SK-N-SH (cell line): ENCODE measurements at regions of chr17 and their contacts with region 1.

Region 1: GRCh38 chr17:58577642-58578091 is 63.2 kb upstream of the MTMR4 start:
- DNase-seq: peak; percentile 56
- H3K4me3 ChIP-seq: no peak overlapping the region; a peak in 1 of 4 replicates
- H3K27ac ChIP-seq: no peak overlapping the region
- H3K4me1 ChIP-seq: no peaks in the 10 kb centered on the region
- H3K27me3 ChIP-seq: 0 out of 2 replicates have a peak, but pooled peaks cover 4% of the 10 kb centered on the region
- CTCF ChIP-seq: peak; percentile 83
- EP300 ChIP-seq: no peak
- RAD21 ChIP-seq: peak; percentile 59

Region 2: DNA sequence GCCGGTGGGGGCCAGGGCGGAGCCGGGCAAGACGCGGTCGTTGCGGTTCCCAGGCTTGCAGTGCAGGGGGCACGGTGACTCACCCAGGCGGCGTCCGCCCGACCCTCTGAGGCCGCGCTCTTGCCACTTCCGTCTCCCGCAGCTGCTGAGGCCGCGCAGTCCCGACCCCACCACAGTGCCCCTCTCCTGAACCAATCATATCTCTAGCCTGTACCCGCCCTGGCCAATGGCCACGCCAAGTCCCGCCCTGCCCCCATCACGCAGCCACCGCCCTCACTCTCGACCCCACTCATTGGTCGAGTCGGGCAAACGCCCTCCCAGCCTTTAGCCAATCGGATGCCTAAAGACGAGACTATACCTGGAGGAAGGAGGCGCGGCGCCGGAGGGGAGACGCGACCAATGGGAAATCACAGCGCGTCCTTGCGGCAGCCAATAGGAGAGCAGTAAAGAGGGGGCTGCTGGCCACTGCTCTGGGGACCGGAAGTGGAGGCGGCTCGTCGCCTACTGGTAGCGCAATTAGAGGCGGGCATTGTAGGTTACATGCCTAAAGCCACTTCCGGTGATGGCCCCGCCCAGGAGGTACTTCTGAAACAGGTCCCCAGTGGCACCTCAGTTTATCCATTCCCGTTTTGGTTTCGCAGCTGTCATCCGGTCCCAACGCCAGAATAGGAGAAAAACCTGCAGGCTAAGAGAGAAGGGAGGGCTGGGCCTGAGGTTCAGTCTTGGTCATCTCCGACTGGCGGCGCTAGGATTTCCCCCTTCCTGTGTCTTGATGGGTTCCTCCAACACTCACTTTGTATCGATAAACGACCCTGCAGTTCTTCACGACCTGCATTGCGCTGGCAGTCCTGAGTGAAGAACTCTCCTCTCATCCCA is 59.7 kb before region 1 on chr17:
- CTCF ChIA-PET with region 1: interaction called, 21 read pairs
- POLR2A ChIA-PET with region 1: no interaction called
- DNase-seq: peak; percentile 96
- H3K4me3 ChIP-seq: peak overlapping the region; percentile 87 to 95
- H3K27ac ChIP-seq: peak overlapping the region; percentile 92 to 97
- H3K4me1 ChIP-seq: peaks cover 5 to 25% of the 10 kb centered on the region in 2 experiments; a peak in 2 of 4 replicates
- H3K27me3 ChIP-seq: no peaks in the 10 kb centered on the region
- CTCF ChIP-seq: no peak
- EP300 ChIP-seq: peak; percentile 18 to 30; a peak in 2 of 4 replicates
- RAD21 ChIP-seq: no peak

Region 3: GRCh38 chr17:58541249-58541648 is 36.4 kb before region 1 on chr17:
- CTCF ChIA-PET with region 1: interaction called, 27 read pairs
- POLR2A ChIA-PET with region 1: no interaction called
- DNase-seq: no peak
- H3K4me3 ChIP-seq: no peak overlapping the region
- H3K27ac ChIP-seq: no peak overlapping the region
- H3K4me1 ChIP-seq: no peaks in the 10 kb centered on the region
- H3K27me3 ChIP-seq: peaks cover 30% of the 10 kb centered on the region
- CTCF ChIP-seq: peak; percentile 35
- EP300 ChIP-seq: no peak
- RAD21 ChIP-seq: no peak

Region 4: GRCh38 chr17:58565780-58566189 is 11.9 kb before region 1 on chr17:
- CTCF ChIA-PET with region 1: interaction called, 26 read pairs
- POLR2A ChIA-PET with region 1: no interaction called
- DNase-seq: no peak
- H3K4me3 ChIP-seq: no peak overlapping the region
- H3K27ac ChIP-seq: no peak overlapping the region
- H3K4me1 ChIP-seq: no peaks in the 10 kb centered on the region
- H3K27me3 ChIP-seq: no peaks in the 10 kb centered on the region; the same call in 1 of the 2 replicates
- CTCF ChIP-seq: no peak
- EP300 ChIP-seq: no peak
- RAD21 ChIP-seq: no peak

Region 5: DNA sequence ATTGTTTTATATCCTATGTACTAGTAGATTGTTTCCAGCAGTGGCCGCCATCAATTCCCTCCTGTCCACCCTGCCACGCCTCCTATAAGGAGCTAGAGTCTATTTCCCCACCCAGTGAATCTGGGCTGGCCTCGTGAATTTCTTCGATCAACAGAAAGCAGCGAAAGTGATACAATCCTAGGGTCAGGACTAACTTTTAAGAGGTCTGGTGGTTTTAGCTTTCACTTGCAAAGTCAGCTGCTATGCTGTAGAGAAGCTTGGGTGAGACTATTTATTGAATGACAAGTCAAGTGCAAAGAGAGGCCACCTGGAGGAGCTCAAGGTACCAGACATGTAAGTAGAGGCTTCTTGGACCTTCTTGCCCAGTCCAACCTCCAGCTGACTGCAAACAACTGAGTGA is 17.7 kb after region 1 on chr17:
- CTCF ChIA-PET with region 1: interaction called, 19 read pairs
- POLR2A ChIA-PET with region 1: no interaction called
- DNase-seq: no peak
- H3K4me3 ChIP-seq: no peak overlapping the region
- H3K27ac ChIP-seq: no peak overlapping the region
- H3K4me1 ChIP-seq: no peaks in the 10 kb centered on the region
- H3K27me3 ChIP-seq: no peaks in the 10 kb centered on the region
- CTCF ChIP-seq: no peak
- EP300 ChIP-seq: no peak
- RAD21 ChIP-seq: no peak

Region 6: DNA sequence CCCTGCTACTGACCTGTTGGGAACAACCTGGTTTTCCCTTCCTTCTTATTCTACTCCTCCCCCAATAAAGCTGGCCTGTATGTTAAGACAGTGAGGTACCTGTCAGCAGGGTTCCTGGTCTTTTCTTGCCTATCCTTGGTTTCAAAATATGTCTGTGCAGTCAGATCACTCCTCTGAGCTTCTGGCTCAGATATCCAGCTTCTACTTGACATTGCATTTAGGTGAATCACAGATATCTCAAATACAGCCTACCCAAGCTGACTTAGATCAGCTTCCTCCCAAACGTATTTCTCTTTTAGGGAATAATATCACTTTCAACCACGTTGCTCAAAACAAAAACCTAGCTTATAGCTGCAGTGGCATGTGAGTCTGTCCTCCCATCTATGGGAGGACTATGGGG is 65.5 kb after region 1 on chr17:
- CTCF ChIA-PET with region 1: no interaction called
- POLR2A ChIA-PET with region 1: no interaction called
- DNase-seq: no peak
- H3K4me3 ChIP-seq: peak overlapping the region in 1 of 2 experiments; percentile 2; a peak in 1 of 4 replicates
- H3K27ac ChIP-seq: no peak overlapping the region
- H3K4me1 ChIP-seq: no peaks in the 10 kb centered on the region
- H3K27me3 ChIP-seq: no peaks in the 10 kb centered on the region
- CTCF ChIP-seq: no peak
- EP300 ChIP-seq: no peak; a peak in 1 of 4 replicates
- RAD21 ChIP-seq: no peak